Panc1 (cell line): ENCODE measurements at regions of chr3 and their contacts with region 1.

Region 1: DNA sequence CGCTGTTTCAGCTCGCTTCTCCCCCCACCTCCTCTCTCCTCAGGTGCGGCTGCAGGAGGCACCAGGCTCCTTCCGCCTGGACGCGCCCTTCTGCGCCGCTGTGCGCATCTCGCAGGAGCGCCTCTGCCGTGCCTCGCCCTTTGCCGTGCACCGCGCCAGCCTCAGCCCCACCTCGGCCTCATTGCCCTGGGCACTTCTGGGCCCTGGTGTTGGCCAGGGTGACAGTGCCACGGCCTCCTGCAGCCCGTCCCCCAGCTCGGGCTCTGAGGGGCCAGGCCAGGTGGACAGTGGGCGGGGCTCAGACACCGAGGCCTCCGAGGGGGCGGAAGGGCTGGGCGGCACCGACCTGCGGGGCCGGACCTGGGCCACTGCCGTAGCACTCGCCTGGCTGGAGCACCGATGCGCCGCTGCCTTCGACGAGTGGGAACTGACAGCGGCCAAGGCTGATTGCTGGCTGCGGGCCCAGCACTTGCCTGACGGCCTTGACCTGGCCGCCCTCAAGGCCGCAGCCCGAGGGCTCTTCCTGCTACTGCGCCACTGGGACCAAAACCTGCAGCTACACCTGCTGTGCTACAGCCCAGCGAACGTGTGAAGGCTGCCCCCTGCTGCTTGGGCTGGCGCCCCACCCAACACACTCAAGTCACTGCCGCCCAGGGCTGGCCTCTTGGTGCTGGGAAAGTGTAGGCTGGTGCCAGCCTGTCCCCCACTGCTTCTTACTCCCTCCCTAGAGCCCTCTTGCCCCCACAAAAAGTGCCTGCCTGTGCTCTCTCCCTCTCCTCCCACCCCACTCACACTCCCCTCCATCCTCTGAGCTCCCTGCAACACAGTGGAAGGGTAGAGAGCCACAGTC is 7.1 kb downstream of the ALG3 start:
- DNase-seq: no peak
- ATAC-seq: peak; percentile 88
- H3K4me3 ChIP-seq: no peak overlapping the region
- H3K27ac ChIP-seq: no peak overlapping the region
- H3K4me1 ChIP-seq: peaks cover 6% of the 10 kb centered on the region
- H3K27me3 ChIP-seq: no peaks in the 10 kb centered on the region
- CTCF ChIP-seq: peak; percentile 82

Region 2: GRCh38 chr3:184096811-184097383 is 144.8 kb before region 1 on chr3 and contains the start of gene HTR3E:
- CTCF ChIA-PET with region 1: no interaction called
- POLR2A ChIA-PET with region 1: no interaction called
- in situ Hi-C with region 1: no loop called
- intact Hi-C with region 1: no loop called
- DNase-seq: no peak
- ATAC-seq: no peak
- H3K4me3 ChIP-seq: no peak within 1 kb of the TSS
- H3K27ac ChIP-seq: no peak within 1 kb of the TSS
- H3K4me1 ChIP-seq: peaks cover 4% of the 10 kb centered on the region; the same call in 1 of the 2 replicates
- H3K27me3 ChIP-seq: no peaks in the 10 kb centered on the region; the same call in 1 of the 2 replicates
- CTCF ChIP-seq: no peak
- total RNA-seq, gene HTR3E: not detected

Region 3: GRCh38 chr3:184145111-184145524 is 96.6 kb before region 1 on chr3:
- CTCF ChIA-PET with region 1: no interaction called
- POLR2A ChIA-PET with region 1: interaction called, 4 read pairs
- in situ Hi-C with region 1: no loop called
- intact Hi-C with region 1: loop called (anchors 5 kb)
- DNase-seq: no peak
- ATAC-seq: peak; percentile 81
- H3K4me3 ChIP-seq: no peak overlapping the region
- H3K27ac ChIP-seq: no peak overlapping the region
- H3K4me1 ChIP-seq: no peaks in the 10 kb centered on the region
- H3K27me3 ChIP-seq: no peaks in the 10 kb centered on the region
- CTCF ChIP-seq: peak; percentile 78